GM18951 (cell line): ENCODE measurements at regions of chr9 and their contacts with region 1.

Region 1: DNA sequence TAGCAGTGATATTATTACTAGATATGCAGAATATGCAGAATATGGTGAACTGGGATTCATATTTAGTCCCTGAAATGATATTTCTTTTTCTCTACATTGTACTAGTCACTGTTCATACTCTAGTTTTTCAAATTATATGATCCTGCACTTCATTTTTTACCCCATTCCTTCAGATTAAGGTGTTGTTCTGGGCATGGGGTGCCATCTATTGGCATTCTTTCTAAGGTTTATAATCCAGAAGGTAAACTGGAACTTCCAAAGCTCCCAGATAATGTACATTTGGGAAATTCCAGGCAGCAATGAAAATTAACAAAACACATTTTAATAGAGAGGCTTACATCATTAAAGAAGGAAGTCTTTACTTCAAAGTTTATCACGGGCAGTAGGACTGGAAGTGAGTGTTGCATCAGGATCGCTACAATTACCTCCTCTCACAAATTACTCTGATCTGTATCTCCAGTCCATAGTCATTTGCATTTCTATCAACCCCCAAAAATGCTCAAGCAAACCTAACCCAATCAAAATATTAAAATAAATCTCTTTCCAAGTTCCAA is 12.5 kb downstream of the RFX3 start:
- POLR2A ChIP-seq: no peak

Region 2: DNA sequence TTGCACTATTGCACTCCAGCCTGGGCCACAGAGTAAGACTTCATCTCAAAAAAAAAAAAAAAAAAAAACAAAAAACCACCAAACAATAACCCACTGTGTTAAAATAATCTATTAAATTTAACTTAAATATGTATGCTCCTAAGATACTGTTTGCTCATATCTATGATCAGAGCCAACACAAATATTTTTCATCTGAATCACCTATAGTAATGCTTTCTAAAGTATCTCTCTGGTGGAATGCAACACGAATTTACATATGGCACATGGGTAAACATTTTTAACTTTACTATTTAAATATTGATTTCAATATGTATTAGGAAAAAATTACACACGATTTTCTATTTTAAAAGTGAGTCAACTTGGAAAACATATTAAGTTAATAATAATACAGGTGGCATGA is 184.0 kb before region 1 on chr9:
- in situ Hi-C with region 1: no loop called
- POLR2A ChIP-seq: no peak

Region 3: GRCh38 chr9:3478549-3478953 is 34.8 kb before region 1 on chr9:
- in situ Hi-C with region 1: loop called (anchors 5 kb)
- POLR2A ChIP-seq: no peak